Heart right ventricle (tissue), 16 donors: ENCODE measurements at regions of chr1 and their contacts with region 1.

Region 1: DNA sequence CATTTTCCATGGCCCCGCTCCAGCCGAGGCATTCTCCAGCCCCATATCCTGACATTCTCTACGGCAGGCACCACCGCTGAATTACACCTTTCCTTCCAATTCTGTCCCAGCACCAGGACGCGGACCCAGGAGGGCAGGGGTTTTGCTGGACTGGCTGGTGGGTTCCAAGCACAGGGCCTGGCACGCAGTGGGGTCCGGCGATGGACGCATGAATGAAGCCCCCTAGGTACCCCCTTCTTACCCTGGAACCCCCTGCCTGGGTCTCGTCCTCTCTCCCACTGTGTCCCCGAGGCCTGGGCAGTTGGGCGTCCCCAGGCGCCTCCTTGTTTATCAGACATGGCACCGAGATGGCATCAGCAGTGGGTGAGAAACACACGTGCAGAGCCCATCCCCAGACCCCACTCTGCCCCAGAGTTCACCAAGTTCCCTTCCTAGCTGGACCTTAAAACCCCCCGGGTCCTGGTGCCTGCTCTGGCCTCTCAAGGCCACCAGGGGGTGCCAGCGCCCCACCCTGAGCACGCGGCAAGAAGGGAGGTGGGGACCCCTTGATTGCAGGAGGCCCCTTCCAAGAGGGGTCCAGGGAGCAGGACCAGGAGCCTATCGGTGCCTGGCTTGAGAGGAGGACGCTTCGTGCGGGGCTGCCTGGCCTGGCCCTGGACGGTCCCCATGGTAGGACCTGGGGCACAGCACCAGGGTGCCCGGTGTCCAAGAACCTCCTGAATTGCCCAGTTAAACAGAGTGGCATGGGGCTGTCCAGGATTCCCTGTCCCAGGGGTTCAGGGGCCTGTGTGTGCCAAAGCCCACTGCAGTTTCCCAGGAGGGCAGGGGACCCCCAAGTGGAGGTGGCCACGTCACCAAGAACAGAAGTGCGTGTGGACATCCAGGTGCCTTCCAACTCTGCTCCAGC is 46.1 kb downstream of the MEGF6 start:
- DNase-seq: no peak
- ATAC-seq: peak in 7 of 8 donors; percentile 30 to 60 (median 47)
- H3K4me3 ChIP-seq: no peak overlapping the region
- H3K27ac ChIP-seq: no peak overlapping the region
- H3K4me1 ChIP-seq: peaks cover 0 to 10% (median 0%) of the 10 kb centered on the region in 9 donors
- H3K27me3 ChIP-seq: peaks cover 0 to 18% (median 0%) of the 10 kb centered on the region in 7 donors
- CTCF ChIP-seq: peak; percentile 45 to 96 (median 89)

Region 2: GRCh38 chr1:3491291-3492246 is 73.6 kb before region 1 on chr1:
- intact Hi-C with region 1: loop called in 3 of 10 experiments (anchors 5 to 10 kb)
- DNase-seq: peak; percentile 72 to 86
- ATAC-seq: peak; percentile 79 to 91 (median 83)
- H3K4me3 ChIP-seq: peak overlapping the region in 1 of 10 donors; percentile 1
- H3K27ac ChIP-seq: no peak overlapping the region
- H3K4me1 ChIP-seq: peaks cover 0 to 9% (median 6%) of the 10 kb centered on the region in 9 donors
- H3K27me3 ChIP-seq: peaks cover 0 to 7% (median 0%) of the 10 kb centered on the region in 7 donors
- CTCF ChIP-seq: peak; percentile 99 to 100 (median 100)

Region 3: GRCh38 chr1:4006676-4007374 is 441.7 kb after region 1 on chr1:
- intact Hi-C with region 1: no loop called
- DNase-seq: no peak
- ATAC-seq: no peak
- H3K4me3 ChIP-seq: no peak overlapping the region
- H3K27ac ChIP-seq: no peak overlapping the region
- H3K4me1 ChIP-seq: no peaks in the 10 kb centered on the region
- H3K27me3 ChIP-seq: peaks cover 0 to 28% (median 9%) of the 10 kb centered on the region in 7 donors
- CTCF ChIP-seq: no peak